H1 (cell line): ENCODE measurements at regions of chr7 and their contacts with region 1.

Region 1: GRCh38 chr7:158734861-158735260 is 30.3 kb upstream of the NCAPG2 start:
- DNase-seq: no peak
- H3K4me3 ChIP-seq: no peak overlapping the region
- H3K27ac ChIP-seq: no peak overlapping the region
- H3K4me1 ChIP-seq: peaks cover 0 to 4% (median 0%) of the 10 kb centered on the region in 4 experiments; a peak in 2 of 7 replicates
- H3K27me3 ChIP-seq: no peaks in the 10 kb centered on the region
- CTCF ChIP-seq: no peak
- EP300 ChIP-seq: no peak
- POLR2A ChIP-seq: no peak
- RAD21 ChIP-seq: no peak

Region 2: GRCh38 chr7:158695726-158696452 is 39.0 kb before region 1 on chr7:
- CTCF ChIA-PET with region 1: interaction called, 25 read pairs
- POLR2A ChIA-PET with region 1: interaction called, 4 read pairs
- DNase-seq: no peak
- H3K4me3 ChIP-seq: no peak overlapping the region
- H3K27ac ChIP-seq: no peak overlapping the region
- H3K4me1 ChIP-seq: peaks cover 0 to 3% (median 0%) of the 10 kb centered on the region in 4 experiments; a peak in 1 of 7 replicates
- H3K27me3 ChIP-seq: no peaks in the 10 kb centered on the region
- CTCF ChIP-seq: peak; percentile 33 to 56 (median 49)
- EP300 ChIP-seq: no peak
- POLR2A ChIP-seq: no peak
- RAD21 ChIP-seq: peak; percentile 72 to 82

Region 3: DNA sequence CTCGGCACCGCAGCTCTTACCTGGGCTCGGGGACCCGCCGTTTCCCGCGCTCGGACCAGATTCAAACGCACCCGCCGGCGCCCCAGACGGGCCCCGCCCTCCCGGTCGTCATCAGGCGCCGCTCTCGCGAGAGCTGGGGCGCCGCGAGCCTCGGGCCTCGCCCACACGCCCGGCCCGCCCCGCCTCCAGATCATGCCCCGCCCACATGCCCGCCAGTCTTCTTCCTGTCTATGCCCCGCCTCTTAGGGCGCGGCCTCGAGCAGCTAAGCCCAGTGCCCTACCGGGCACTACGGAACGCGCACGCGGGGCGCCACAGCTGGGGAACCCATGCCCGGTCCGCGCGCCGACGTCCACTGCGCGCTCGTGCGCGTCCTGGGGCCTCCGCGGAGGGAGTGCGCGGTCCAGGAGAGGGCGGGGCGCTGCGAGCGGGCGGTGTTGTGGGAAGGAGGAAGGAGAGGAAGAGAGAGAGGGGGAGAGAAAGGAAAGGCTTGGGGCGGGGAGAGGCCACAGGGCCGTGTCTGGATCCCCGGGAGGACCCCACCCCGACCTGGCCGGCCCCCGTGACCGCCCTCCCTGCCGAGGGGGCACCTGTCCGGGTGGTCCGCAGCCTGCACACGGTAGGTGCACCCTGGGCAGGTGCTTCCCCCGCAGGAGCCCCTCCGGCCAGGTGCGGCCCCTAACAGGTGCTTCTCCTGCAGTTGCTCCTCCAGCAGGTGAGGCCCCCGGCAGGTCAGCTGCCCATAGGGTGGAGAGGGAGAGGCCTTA is 30.0 kb before region 1 on chr7 and contains the start of gene NCAPG2:
- CTCF ChIA-PET with region 1: interaction called, 37 read pairs
- POLR2A ChIA-PET with region 1: interaction called, 8 read pairs
- DNase-seq: peak; percentile 90 to 98
- H3K4me3 ChIP-seq: peak within 1 kb of the TSS; percentile 70 to 96 (median 84)
- H3K27ac ChIP-seq: peak within 1 kb of the TSS; percentile 91
- H3K4me1 ChIP-seq: peaks cover 6 to 20% (median 12%) of the 10 kb centered on the region in 4 experiments; a peak in 6 of 7 replicates
- H3K27me3 ChIP-seq: no peaks in the 10 kb centered on the region
- CTCF ChIP-seq: peak in 1 of 3 experiments; percentile 18; a peak in 1 of 4 replicates
- EP300 ChIP-seq: 0 out of 3 replicates have a peak, but pooled peaks of 1 of the 2 experiments have one; percentile 25
- POLR2A ChIP-seq: peak; percentile 64 to 84
- RAD21 ChIP-seq: no peak
- total RNA-seq, gene NCAPG2: 119 and 125 TPM in 2 replicates

Region 4: DNA sequence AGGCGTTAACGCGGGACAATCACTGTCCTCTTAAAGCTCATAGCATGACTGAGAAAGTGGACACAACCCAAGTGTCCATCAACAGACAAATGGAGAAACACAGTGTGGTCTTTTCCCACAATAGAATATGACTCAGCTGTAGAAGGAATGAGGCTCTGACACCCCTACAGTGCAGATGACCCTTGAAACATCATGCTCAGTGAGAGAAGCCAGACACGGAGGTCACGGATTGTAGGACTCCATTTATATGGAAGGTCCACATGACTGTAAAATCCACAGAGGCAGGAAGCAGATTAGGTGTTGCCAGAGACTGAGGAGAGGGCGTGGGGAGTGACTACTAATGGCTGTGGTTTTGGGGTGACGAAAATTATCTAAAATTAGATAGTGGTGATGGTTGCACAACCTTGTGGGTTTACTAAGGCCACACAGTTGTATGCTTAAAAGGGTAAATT is 24.2 kb before region 1 on chr7:
- CTCF ChIA-PET with region 1: interaction called, 37 read pairs
- POLR2A ChIA-PET with region 1: interaction called, 5 read pairs
- DNase-seq: peak in 1 of 2 experiments; percentile 20
- H3K4me3 ChIP-seq: no peak overlapping the region
- H3K27ac ChIP-seq: no peak overlapping the region
- H3K4me1 ChIP-seq: peaks cover 0 to 3% (median 0%) of the 10 kb centered on the region in 4 experiments; a peak in 1 of 7 replicates
- H3K27me3 ChIP-seq: no peaks in the 10 kb centered on the region
- CTCF ChIP-seq: no peak
- EP300 ChIP-seq: no peak
- POLR2A ChIP-seq: no peak
- RAD21 ChIP-seq: no peak

Region 5: DNA sequence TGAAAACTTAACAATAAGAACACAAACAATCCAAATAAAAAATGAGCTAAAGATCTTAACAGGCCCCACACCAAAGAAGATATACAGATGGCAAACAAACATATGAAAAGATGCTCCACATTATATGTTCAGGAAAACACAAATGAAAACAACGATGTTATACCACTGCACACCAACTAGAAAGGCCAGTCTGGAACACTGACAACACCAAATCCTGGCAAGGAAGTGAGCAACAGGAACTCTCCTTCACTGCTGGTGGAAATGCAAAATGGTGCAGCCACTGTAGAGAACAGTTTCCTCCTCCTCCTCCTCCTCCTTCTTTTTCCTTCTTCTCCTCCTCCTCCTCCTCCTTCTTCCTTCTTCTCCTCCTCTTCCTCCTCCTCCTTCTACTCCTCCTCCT is 18.1 kb before region 1 on chr7:
- CTCF ChIA-PET with region 1: interaction called, 18 read pairs
- POLR2A ChIA-PET with region 1: no interaction called
- DNase-seq: no peak
- H3K4me3 ChIP-seq: no peak overlapping the region
- H3K27ac ChIP-seq: no peak overlapping the region
- H3K4me1 ChIP-seq: no peaks in the 10 kb centered on the region
- H3K27me3 ChIP-seq: no peaks in the 10 kb centered on the region; a peak in 2 of 7 replicates
- CTCF ChIP-seq: no peak
- EP300 ChIP-seq: no peak
- POLR2A ChIP-seq: no peak
- RAD21 ChIP-seq: no peak

Region 6: GRCh38 chr7:158723266-158723665 is 11.6 kb before region 1 on chr7:
- CTCF ChIA-PET with region 1: interaction called, 18 read pairs
- POLR2A ChIA-PET with region 1: no interaction called
- DNase-seq: peak in 1 of 2 experiments; percentile 37
- H3K4me3 ChIP-seq: no peak overlapping the region
- H3K27ac ChIP-seq: no peak overlapping the region
- H3K4me1 ChIP-seq: no peaks in the 10 kb centered on the region
- H3K27me3 ChIP-seq: no peaks in the 10 kb centered on the region; a peak in 1 of 7 replicates
- CTCF ChIP-seq: no peak
- EP300 ChIP-seq: no peak
- POLR2A ChIP-seq: no peak
- RAD21 ChIP-seq: no peak

Region 7: DNA sequence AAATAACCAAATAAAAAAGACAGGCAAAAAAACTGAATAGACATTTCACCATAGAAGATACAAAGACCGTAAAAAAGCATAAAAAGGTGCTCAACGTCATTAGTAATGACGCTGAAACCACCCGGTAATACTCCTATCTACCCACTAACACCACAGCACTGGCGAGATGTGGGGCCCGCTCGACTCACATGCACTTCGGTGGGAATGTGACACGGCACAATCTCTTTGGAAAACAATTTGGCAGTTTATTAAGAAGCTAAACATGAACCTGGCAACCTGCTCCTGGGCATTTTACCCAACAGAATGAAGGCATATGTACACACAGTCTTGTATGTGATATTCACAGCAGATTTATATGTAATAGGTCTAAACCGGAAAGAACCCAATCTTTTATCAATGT is 12.5 kb after region 1 on chr7:
- CTCF ChIA-PET with region 1: interaction called, 29 read pairs
- POLR2A ChIA-PET with region 1: no interaction called
- DNase-seq: no peak
- H3K4me3 ChIP-seq: no peak overlapping the region
- H3K27ac ChIP-seq: no peak overlapping the region
- H3K4me1 ChIP-seq: no peaks in the 10 kb centered on the region
- H3K27me3 ChIP-seq: no peaks in the 10 kb centered on the region
- CTCF ChIP-seq: no peak
- EP300 ChIP-seq: no peak
- POLR2A ChIP-seq: no peak
- RAD21 ChIP-seq: no peak

Region 8: DNA sequence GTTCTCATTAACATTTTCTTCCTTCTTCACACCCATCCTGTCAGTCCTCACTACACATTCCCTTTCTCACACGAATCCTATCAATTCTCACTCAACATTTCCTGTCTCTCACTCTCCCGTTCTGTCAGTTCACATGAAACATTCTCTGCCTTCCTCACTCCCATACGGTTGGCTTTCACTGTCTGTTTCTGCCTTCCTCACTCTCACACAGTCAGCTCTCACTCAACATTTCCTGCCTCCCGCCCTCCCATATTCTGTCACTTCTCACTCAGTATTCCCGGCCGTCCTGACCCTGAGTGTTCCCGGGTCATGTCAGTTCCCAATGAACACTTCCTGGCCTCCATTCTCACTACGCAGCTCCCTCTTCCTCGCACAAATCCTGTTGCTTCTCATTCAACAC is 183.0 kb after region 1 on chr7:
- CTCF ChIA-PET with region 1: no interaction called
- POLR2A ChIA-PET with region 1: no interaction called
- DNase-seq: no peak
- H3K4me3 ChIP-seq: no peak overlapping the region
- H3K27ac ChIP-seq: no peak overlapping the region
- H3K4me1 ChIP-seq: no peaks in the 10 kb centered on the region
- H3K27me3 ChIP-seq: no peaks in the 10 kb centered on the region
- CTCF ChIP-seq: no peak
- EP300 ChIP-seq: no peak
- POLR2A ChIP-seq: no peak
- RAD21 ChIP-seq: no peak